ENCODE measurements at regions of chr10 and their contacts with region 1.

Region 1: DNA sequence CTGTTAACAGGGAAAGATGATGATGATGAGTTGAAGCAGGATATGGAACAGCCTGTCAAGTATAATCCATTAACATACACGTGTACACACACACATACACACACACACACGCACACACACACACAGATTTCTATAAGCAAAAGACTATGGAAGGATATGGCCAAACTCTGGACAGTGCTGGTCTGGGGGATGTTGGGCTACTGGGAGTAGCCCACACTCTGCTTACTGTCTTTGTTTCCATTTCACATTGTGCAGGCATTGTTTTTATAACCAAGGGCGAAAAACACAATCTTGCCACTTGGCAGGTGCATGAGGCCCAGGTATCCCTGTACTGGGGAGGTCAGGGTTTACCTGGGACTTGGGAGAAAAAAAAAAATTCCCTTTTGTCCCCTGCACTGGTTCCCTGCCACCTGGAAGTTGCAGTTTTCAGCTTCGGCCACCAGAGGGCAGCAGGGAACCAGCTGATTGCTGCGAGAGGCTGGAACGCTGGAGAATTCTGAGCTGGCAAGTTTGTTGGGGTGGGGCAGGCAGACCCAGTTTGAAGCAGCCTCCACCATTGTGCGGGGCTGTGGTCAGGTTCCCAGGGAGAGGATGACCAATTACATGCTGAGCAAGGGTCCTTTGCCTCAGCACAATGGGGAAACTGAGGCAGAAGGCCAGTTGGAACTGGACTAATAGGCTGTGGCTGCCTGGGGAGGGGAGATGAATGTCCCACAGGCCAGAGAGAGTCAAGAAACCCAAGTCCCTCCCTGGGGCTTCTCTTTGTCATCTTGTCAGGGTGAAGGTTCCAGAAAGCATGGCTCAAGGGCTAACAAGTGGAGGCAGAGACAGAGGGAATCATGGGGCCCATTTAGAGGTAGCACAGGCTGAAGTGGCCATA is 27.3 kb downstream of the PPIF start:
- DNase-seq: peak; percentile 65
- H3K4me3 ChIP-seq: no peak overlapping the region
- H3K27ac ChIP-seq: no peak overlapping the region
- H3K4me1 ChIP-seq: no peaks in the 10 kb centered on the region
- CTCF ChIP-seq: peak; percentile 97

Region 2: GRCh38 chr10:79358783-79359182 is 15.8 kb before region 1 on chr10:
- CTCF ChIA-PET with region 1: no interaction called
- POLR2A ChIA-PET with region 1: no interaction called
- intact Hi-C with region 1: no loop called
- DNase-seq: no peak
- H3K4me3 ChIP-seq: no peak overlapping the region
- H3K27ac ChIP-seq: no peak overlapping the region
- H3K4me1 ChIP-seq: no peaks in the 10 kb centered on the region
- CTCF ChIP-seq: no peak

Region 3: GRCh38 chr10:79463578-79464496 is 89.3 kb after region 1 on chr10:
- CTCF ChIA-PET with region 1: interaction called, 4 read pairs
- POLR2A ChIA-PET with region 1: no interaction called
- intact Hi-C with region 1: loop called (anchors 1 kb)
- DNase-seq: no peak
- H3K4me3 ChIP-seq: no peak overlapping the region
- H3K27ac ChIP-seq: no peak overlapping the region
- H3K4me1 ChIP-seq: no peaks in the 10 kb centered on the region
- CTCF ChIP-seq: no peak

Region 4: GRCh38 chr10:79487296-79488194 is 113.0 kb after region 1 on chr10:
- CTCF ChIA-PET with region 1: no interaction called
- POLR2A ChIA-PET with region 1: no interaction called
- intact Hi-C with region 1: loop called (anchors 1 kb)
- DNase-seq: peak; percentile 56
- H3K4me3 ChIP-seq: no peak overlapping the region
- H3K27ac ChIP-seq: no peak overlapping the region
- H3K4me1 ChIP-seq: no peaks in the 10 kb centered on the region
- CTCF ChIP-seq: peak; percentile 76

Measured in OCI-LY7 (cell line).